ENCODE measurements at regions of chrX and their contacts with region 1.

Region 1: GRCh38 chrX:101759000-101759399 is 99.3 kb upstream of the ARMCX2 start:
- DNase-seq: peak; percentile 49
- ATAC-seq: peak; percentile 72
- H3K4me3 ChIP-seq: no peak overlapping the region
- H3K27ac ChIP-seq: no peak overlapping the region
- H3K4me1 ChIP-seq: no peaks in the 10 kb centered on the region
- H3K27me3 ChIP-seq: no peaks in the 10 kb centered on the region; the same call in 1 of the 2 replicates
- CTCF ChIP-seq: peak; percentile 45
- POLR2A ChIP-seq: no peak
- RAD21 ChIP-seq: peak; percentile 36

Region 2: DNA sequence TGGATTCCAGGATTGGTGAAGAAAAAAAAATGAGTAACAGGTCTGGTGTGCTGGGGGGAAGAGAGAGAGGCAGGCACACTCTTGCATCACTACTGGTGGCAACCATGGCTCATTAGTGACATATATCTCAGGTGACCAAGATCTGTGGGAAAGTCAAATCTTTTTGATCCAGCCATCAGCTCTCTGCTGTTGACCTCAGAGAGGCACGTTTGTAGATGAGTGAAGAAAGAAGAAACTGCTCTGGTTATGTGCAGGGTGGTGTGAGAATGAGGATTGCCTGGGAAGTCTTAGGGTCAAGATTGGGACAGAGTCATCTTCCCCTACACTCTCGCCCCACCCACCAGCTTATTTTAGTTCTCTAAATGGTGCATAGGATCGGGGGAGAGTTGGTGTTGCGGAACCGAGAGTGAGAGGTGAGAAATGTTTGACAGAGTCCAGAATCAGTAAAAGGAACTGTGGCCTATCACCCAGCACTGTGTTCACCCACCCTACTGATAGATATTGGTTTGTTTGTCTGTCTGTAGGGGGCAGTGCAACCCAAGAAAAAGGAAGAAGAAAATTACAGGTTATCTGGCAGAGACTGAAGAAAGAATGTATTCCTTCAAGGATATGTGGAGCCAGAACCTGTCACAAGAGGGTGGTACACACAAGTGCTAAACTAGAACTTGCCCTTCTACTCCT is 163.1 kb before region 1 on chrX:
- CTCF ChIA-PET with region 1: no interaction called
- POLR2A ChIA-PET with region 1: no interaction called
- dilution Hi-C with region 1: no loop called
- in situ Hi-C with region 1: no loop called
- intact Hi-C with region 1: loop called (anchors 5 kb)
- DNase-seq: peak; percentile 75
- ATAC-seq: peak; percentile 87
- H3K4me3 ChIP-seq: no peak overlapping the region
- H3K27ac ChIP-seq: no peak overlapping the region
- H3K4me1 ChIP-seq: no peaks in the 10 kb centered on the region
- H3K27me3 ChIP-seq: peaks cover 19% of the 10 kb centered on the region
- CTCF ChIP-seq: peak; percentile 78
- POLR2A ChIP-seq: no peak
- RAD21 ChIP-seq: peak; percentile 85

Region 3: DNA sequence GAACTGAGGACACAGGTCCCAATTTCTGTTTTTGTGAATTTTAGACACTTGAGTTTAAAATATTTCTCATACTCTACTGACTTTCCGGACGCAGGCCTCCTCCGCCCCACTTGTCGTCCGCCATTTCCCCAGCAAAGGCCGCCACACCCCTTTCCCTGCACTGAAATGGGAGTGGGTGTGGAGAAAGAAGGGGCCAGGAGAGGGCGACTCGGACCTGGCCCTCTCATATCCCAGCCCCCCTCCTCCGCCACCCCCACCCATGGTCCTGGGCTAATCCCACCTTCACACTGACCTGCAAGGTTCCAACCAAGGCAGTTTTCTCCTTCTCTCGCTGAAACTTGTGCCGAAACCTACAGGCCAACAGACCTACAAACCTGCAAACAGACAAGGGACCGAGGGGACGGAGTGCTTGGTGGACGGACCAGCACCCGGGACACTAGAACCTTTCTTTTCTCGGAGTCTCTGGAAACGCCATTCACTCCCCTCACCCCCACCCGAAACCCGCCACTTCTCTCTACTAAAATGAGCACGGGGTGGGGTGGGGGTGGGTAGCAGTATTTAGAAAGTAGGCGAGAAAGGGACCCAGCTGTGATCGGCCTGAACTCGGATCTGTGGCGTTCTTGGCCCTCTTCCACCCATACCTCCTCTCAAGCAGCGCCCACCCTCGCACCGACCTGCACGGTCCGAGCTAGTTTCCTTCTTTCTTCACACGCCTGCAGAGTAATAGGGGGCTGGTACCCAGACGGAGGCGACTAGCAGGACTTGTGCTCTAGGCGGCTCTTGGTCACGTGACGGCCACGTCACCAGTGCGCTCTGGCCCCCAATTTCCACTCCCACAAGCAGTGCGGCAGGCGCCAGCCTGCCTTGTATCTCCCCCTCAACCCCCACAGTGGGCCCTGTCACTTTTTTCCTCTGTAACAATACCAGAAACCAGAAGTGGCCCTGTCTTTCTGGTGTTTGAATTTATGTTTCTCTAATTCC is 141.5 kb before region 1 on chrX and contains the start of gene ARMCX6:
- CTCF ChIA-PET with region 1: no interaction called
- POLR2A ChIA-PET with region 1: no interaction called
- dilution Hi-C with region 1: no loop called
- in situ Hi-C with region 1: no loop called
- intact Hi-C with region 1: loop called (anchors 5 kb)
- DNase-seq: peak; percentile 77
- ATAC-seq: peak; percentile 90
- H3K4me3 ChIP-seq: peak within 1 kb of the TSS; percentile 82
- H3K27ac ChIP-seq: peak within 1 kb of the TSS; percentile 82
- H3K4me1 ChIP-seq: peaks cover 2% of the 10 kb centered on the region
- H3K27me3 ChIP-seq: no peaks in the 10 kb centered on the region; the same call in 1 of the 2 replicates
- CTCF ChIP-seq: peak; percentile 39
- POLR2A ChIP-seq: no peak
- RAD21 ChIP-seq: peak; percentile 30; the same call in 1 of the 2 replicates
- total RNA-seq, gene ARMCX6: 26.7 and 29.0 TPM in 2 replicates

Region 4: DNA sequence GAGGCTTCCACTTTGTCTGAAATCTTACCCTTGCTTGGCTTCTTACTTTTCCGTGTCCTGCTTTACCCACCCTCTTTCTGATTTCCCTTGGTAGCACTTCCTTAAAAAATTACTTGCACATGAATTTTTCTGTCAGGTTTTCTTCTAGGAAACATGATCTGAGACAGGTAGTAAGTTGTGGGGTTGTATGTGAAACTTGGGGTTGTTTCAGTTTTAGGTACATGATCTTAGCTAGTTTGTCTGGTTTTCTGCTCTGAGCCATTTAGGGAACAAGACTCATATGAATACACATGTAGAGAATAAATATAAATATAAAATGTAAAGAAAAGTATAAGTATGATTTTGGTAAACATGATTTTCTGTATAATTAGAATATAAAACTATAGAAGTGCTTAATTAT is 82.0 kb before region 1 on chrX:
- CTCF ChIA-PET with region 1: no interaction called
- POLR2A ChIA-PET with region 1: no interaction called
- dilution Hi-C with region 1: no loop called
- in situ Hi-C with region 1: no loop called
- intact Hi-C with region 1: loop called (anchors 5 kb)
- DNase-seq: no peak
- ATAC-seq: no peak
- H3K4me3 ChIP-seq: no peak overlapping the region
- H3K27ac ChIP-seq: no peak overlapping the region
- H3K4me1 ChIP-seq: no peaks in the 10 kb centered on the region
- H3K27me3 ChIP-seq: peaks cover 7% of the 10 kb centered on the region
- CTCF ChIP-seq: no peak
- POLR2A ChIP-seq: no peak
- RAD21 ChIP-seq: no peak

Region 5: GRCh38 chrX:101744085-101744484 is 14.9 kb before region 1 on chrX:
- CTCF ChIA-PET with region 1: interaction called, 10 read pairs
- POLR2A ChIA-PET with region 1: no interaction called
- dilution Hi-C with region 1: no loop called
- in situ Hi-C with region 1: no loop called
- intact Hi-C with region 1: no loop called
- DNase-seq: no peak
- ATAC-seq: no peak
- H3K4me3 ChIP-seq: no peak overlapping the region
- H3K27ac ChIP-seq: no peak overlapping the region
- H3K4me1 ChIP-seq: no peaks in the 10 kb centered on the region
- H3K27me3 ChIP-seq: no peaks in the 10 kb centered on the region; the same call in 1 of the 2 replicates
- CTCF ChIP-seq: no peak
- POLR2A ChIP-seq: no peak
- RAD21 ChIP-seq: no peak